ENCODE measurements at regions of chr18 and their contacts with region 1.

Region 1: DNA sequence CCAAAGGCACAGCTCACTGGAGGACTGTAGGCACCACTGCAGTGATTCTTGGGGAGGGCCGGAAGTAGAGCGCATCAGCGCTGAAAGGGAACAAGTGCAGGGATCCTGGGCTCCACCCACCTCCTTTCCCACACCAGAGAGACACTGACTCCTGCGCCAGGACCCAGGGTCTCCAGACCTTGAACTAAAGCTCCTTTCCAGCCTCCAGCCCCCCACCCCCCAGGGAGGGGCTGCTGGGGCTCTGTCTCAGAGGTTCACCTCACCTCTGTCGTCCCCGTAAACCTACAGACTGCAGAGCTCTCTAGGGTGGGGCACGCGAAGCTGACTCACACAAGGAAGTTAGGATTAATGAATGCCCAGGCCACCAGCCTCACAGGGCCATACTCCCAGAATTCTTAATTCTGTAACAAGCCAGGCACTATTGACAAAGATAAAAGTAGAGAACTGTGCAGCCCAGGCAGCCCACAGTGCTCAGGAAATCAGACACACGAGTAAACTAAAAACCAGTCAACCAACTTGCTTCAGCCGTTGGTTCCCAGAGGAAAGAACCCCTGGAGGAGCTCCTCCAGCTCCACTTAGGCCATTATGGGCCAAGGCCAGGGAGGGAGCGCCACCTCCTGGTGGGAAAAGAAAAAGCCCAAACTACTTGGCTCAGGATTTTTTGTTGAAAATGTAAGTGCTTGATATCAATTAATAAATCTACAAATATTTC is 45.1 kb upstream of the ACAA2 start:
- DNase-seq: no peak
- H3K4me3 ChIP-seq: no peak overlapping the region
- H3K27ac ChIP-seq: no peak overlapping the region
- H3K4me1 ChIP-seq: no peaks in the 10 kb centered on the region
- H3K27me3 ChIP-seq: no peaks in the 10 kb centered on the region
- CTCF ChIP-seq: peak; percentile 45 to 85 (median 72)
- POLR2A ChIP-seq: no peak

Region 2: DNA sequence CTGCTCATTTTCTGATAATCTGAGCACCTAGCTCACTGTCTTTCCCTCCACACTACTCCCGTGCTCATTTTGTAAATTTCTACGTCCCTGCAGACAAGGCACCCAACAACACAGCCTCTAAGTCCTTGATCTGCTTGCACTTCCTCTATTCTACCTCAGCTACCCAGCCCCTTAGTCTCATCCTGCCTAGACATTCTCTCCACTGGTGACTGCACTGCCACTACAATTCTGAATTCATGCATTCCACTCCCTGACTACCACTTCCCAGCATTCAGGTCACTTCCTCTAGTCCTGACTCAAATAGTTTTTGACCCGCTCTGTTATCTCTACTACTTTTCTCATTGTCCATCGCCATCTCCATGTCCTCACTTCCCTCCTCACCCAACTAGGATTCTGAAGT is 553.7 kb before region 1 on chr18:
- intact Hi-C with region 1: no loop called
- DNase-seq: no peak
- H3K4me3 ChIP-seq: no peak overlapping the region
- H3K27ac ChIP-seq: no peak overlapping the region
- H3K4me1 ChIP-seq: peaks cover 0 to 4% (median 0%) of the 10 kb centered on the region in 6 donors
- H3K27me3 ChIP-seq: no peaks in the 10 kb centered on the region
- CTCF ChIP-seq: no peak
- POLR2A ChIP-seq: no peak

Region 3: DNA sequence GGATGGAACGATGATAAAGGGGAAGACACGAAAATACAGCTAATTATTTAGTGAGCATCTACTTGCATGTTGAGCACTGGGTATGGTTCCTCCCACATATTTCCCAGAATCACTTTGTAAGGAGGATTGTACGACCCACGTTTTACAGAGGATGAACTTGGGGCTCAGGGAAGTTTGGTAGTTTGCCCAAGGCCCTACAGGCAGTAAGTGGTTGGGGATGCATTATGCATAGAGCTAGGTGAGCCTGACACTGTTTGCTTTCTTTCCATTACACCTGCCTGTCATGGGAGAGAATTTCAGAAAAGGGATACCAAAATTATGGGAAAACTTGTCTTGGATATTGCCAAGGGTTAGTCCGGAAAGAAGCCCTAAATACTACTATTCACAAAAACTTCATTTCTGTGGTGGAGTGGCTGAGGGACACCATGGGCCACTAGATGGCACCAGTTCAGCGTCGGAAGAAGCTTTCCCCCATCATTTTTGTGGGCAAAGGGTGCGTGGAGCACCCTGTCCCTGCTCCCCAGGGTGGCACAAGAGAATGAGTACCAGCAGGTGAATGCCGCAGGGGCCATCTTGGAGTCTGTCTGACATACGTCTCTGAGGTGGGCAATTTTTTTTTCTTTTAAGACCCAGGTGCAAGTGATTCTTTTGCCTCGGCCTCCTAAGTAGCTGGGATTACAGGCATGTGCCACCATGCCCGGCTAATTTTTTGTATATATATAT is 347.9 kb before region 1 on chr18:
- intact Hi-C with region 1: loop called (anchors 5 kb)
- DNase-seq: no peak
- H3K4me3 ChIP-seq: no peak overlapping the region
- H3K27ac ChIP-seq: no peak overlapping the region
- H3K4me1 ChIP-seq: peaks cover 0 to 3% (median 0%) of the 10 kb centered on the region in 6 donors
- H3K27me3 ChIP-seq: peaks cover 0 to 17% (median 0%) of the 10 kb centered on the region in 7 donors
- CTCF ChIP-seq: peak in 10 of 11 experiments; percentile 26 to 84 (median 72)
- POLR2A ChIP-seq: no peak

Region 4: DNA sequence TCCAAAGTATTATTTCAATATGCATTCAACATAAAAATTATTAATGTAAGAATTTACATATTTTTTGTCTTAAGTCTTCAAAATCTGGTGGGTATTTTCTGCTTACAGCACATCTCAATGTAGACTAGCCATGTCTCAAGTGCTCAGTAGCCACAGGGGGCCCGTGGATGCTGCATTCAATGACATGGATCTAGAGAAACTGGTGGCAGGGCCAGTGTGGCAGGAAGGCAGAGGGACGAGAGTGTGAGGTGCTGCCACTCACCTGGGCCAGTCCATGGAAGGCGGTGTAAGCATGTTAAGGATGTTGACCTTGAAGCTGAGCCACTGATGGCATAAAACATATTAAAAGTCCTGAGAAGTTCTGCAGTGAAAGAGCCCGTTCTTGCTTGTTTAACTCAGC is 302.8 kb before region 1 on chr18:
- intact Hi-C with region 1: loop called (anchors 5 kb)
- DNase-seq: no peak
- H3K4me3 ChIP-seq: no peak overlapping the region
- H3K27ac ChIP-seq: no peak overlapping the region
- H3K4me1 ChIP-seq: peaks cover under 1 to 3% (median 3%) of the 10 kb centered on the region in 6 donors
- H3K27me3 ChIP-seq: peaks cover 0 to 55% (median 12%) of the 10 kb centered on the region in 7 donors
- CTCF ChIP-seq: no peak
- POLR2A ChIP-seq: no peak